Endothelial cell of umbilical vein (primary cell): ENCODE measurements at regions of chr10 and their contacts with region 1.

Region 1: GRCh38 chr10:90871766-90872647 is at the start of gene RPP30:
- DNase-seq: peak; percentile 92
- H3K4me3 ChIP-seq: peak within 1 kb of the TSS; percentile 89 to 93 (median 91)
- H3K27ac ChIP-seq: peak within 1 kb of the TSS; percentile 61
- H3K4me1 ChIP-seq: peaks cover 18% of the 10 kb centered on the region
- H3K27me3 ChIP-seq: peaks cover 13 to 19% of the 10 kb centered on the region in 2 experiments
- CTCF ChIP-seq: no peak
- POLR2A ChIP-seq: peak; percentile 80
- total RNA-seq, gene RPP30: 44.3 and 47.8 TPM in 2 replicates

Region 2: DNA sequence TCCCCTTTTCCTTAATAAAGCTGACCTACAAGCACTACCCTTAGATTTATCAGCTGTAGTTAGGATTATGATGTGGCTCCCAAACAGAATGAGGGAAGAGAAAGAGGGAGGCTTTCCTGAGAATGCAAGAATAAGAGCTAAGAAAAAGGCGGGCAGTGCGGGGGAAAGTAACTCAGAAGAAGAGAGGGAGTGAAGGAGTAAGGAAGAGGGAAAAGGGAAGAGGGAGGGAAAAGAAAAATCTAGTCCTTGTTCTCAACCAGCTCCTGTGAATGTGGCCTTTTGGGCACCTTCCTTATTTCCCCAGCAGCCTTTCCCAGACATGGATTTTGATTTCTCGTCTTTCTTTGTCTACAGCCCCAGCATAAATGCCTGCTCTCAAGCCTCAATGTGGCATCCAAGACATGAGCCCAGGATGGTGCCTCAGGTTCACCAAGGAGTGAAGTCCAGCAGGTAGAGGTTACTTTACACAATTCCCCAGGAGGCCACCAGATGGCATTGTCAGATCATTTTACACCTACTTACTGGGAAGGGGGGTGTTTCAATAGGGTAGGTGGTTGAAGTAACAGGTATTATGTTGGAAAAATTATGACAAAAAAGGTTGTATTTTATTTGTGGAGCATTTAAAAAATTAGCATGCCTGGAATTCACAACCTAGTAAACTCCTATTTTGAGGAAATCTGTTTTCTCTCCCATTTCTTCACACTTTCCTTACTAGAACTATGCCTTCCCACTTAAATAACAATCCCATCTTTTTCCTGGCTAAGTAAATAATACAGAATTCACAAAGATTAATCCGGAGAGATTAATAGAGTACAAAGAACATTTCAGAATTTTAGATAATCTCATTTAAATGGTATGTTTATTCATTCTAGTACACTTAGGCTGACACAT is 120.7 kb before region 1 on chr10:
- CTCF ChIA-PET with region 1: interaction called, 169 read pairs
- POLR2A ChIA-PET with region 1: no interaction called
- dilution Hi-C with region 1: no loop called
- intact Hi-C with region 1: loop called (anchors 1 kb)
- DNase-seq: peak; percentile 58
- H3K4me3 ChIP-seq: no peak overlapping the region
- H3K27ac ChIP-seq: no peak overlapping the region
- H3K4me1 ChIP-seq: no peaks in the 10 kb centered on the region
- H3K27me3 ChIP-seq: peaks cover 4 to 11% of the 10 kb centered on the region in 2 experiments
- CTCF ChIP-seq: peak; percentile 63 to 66
- POLR2A ChIP-seq: no peak

Region 3: GRCh38 chr10:90969947-90970684 is 98.1 kb after region 1 on chr10:
- CTCF ChIA-PET with region 1: no interaction called
- POLR2A ChIA-PET with region 1: no interaction called
- dilution Hi-C with region 1: no loop called
- intact Hi-C with region 1: no loop called
- DNase-seq: no peak
- H3K4me3 ChIP-seq: no peak overlapping the region
- H3K27ac ChIP-seq: peak overlapping the region; percentile 28
- H3K4me1 ChIP-seq: peaks cover 8% of the 10 kb centered on the region
- H3K27me3 ChIP-seq: no peaks in the 10 kb centered on the region
- CTCF ChIP-seq: no peak
- POLR2A ChIP-seq: no peak

Region 4: GRCh38 chr10:91163269-91163868 is 291.4 kb after region 1 on chr10:
- CTCF ChIA-PET with region 1: no interaction called
- POLR2A ChIA-PET with region 1: no interaction called
- dilution Hi-C with region 1: no loop called
- intact Hi-C with region 1: loop called (anchors 5 kb)
- DNase-seq: peak; percentile 55
- H3K4me3 ChIP-seq: peak overlapping the region; percentile 61 to 84 (median 71)
- H3K27ac ChIP-seq: peak overlapping the region; percentile 74
- H3K4me1 ChIP-seq: peaks cover 6% of the 10 kb centered on the region
- H3K27me3 ChIP-seq: no peaks in the 10 kb centered on the region
- CTCF ChIP-seq: no peak
- POLR2A ChIP-seq: peak; percentile 21

Region 5: GRCh38 chr10:91797874-91798648 is 926.1 kb after region 1 on chr10 and contains the start of gene TNKS2:
- CTCF ChIA-PET with region 1: no interaction called
- POLR2A ChIA-PET with region 1: no interaction called
- dilution Hi-C with region 1: no loop called
- intact Hi-C with region 1: loop called (anchors 10 kb)
- DNase-seq: peak; percentile 96
- H3K4me3 ChIP-seq: peak within 1 kb of the TSS; percentile 89 to 97 (median 89)
- H3K27ac ChIP-seq: peak within 1 kb of the TSS; percentile 64
- H3K4me1 ChIP-seq: peaks cover 24% of the 10 kb centered on the region
- H3K27me3 ChIP-seq: no peaks in the 10 kb centered on the region
- CTCF ChIP-seq: no peak
- POLR2A ChIP-seq: peak; percentile 95
- total RNA-seq, gene TNKS2: 33.3 and 34.0 TPM in 2 replicates